Activated CD4-positive, alpha-beta T cell treated with anti-CD3 and anti-CD28 coated beads for 36 hours (primary cell): ENCODE measurements at regions of chr6 and their contacts with region 1.

Region 1: GRCh38 chr6:108492131-108492766 is 68.5 kb upstream of the FOXO3 start:
- DNase-seq: no peak
- ATAC-seq: peak; percentile 44
- H3K4me3 Mint-ChIP-seq: no peak overlapping the region
- H3K27ac Mint-ChIP-seq: no peak overlapping the region
- H3K4me1 Mint-ChIP-seq: no peaks in the 10 kb centered on the region
- H3K27me3 Mint-ChIP-seq: no peaks in the 10 kb centered on the region

Region 2: GRCh38 chr6:108250240-108250866 is 241.9 kb before region 1 on chr6:
- CTCF ChIA-PET with region 1: interaction called, 4 read pairs
- POLR2A ChIA-PET with region 1: no interaction called
- intact Hi-C with region 1: loop called in 1 of 2 experiments (anchors 5 kb)
- DNase-seq: no peak
- ATAC-seq: no peak
- H3K4me3 Mint-ChIP-seq: no peak overlapping the region
- H3K27ac Mint-ChIP-seq: no peak overlapping the region
- H3K4me1 Mint-ChIP-seq: peaks cover 48% of the 10 kb centered on the region
- H3K27me3 Mint-ChIP-seq: no peaks in the 10 kb centered on the region

Region 3: DNA sequence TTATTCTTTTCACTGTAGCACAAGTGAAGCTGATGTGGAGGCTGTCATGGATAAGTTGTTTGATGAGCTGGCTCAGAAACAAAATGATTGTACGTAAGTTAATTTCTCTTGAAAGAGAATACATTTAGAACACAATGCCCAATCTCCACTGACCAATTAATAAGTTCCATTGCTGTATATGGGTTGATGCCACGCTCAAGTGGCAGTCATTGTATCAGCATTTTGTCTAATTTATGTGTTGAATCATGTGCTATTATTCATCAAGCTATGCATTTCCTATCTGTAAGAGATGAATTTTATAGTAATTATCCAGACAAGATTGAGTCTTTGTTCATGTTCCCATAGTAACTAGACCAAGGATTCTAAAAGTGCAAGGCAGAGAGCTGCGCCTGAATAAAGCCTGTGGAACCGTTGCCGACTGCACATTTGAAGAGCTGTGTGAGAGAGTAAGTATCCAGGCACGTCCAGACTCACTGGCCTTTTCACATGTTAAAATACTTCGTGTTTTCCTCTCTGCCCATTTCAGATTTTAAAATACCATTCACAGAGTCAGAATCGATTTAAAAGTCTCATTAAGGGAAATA is 15.3 kb before region 1 on chr6:
- CTCF ChIA-PET with region 1: interaction called, 15 read pairs
- POLR2A ChIA-PET with region 1: no interaction called
- intact Hi-C with region 1: no loop called
- DNase-seq: no peak
- ATAC-seq: no peak
- H3K4me3 Mint-ChIP-seq: no peak overlapping the region
- H3K27ac Mint-ChIP-seq: no peak overlapping the region
- H3K4me1 Mint-ChIP-seq: peaks cover 4% of the 10 kb centered on the region
- H3K27me3 Mint-ChIP-seq: peaks cover 1% of the 10 kb centered on the region

Region 4: DNA sequence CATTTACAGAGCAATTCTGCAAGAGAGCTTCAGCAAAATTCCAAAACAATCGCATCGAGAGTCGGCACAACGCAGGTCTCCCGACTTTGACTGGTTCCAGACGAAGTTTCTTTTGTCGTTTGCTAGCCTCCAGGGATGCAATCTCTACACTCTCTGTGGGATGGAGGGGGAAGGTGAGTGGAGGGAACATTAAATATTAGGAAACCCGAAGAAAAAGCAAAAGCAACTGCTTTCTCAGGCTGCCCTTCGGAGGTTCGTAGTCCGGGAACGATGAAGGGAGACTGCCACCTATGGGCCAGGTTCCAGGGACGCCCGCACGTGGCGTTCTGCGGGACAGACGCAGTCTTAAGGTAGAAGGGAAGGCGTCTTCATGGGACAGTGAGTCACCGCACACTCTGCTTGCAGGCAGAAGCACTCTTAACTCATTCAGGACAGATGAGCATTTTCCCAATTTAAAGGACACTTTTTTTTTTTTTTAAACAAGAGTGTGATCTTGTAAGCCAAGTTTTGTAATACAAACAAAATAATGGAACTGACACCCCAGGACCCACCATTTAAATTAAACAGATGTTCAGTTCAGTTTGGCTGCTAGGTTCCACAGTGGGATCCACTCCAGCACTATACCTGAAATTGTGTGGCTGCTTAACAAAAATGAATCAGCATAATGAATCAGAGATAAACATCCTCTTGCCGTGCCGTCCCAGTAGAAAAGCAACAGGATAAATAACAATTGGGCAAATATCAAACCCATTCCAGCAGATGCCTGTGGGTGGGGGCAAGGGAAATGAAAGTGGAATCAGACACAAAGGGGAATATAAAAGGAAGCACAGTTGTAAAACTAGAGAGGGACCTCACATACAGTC is 290.2 kb after region 1 on chr6:
- CTCF ChIA-PET with region 1: no interaction called
- POLR2A ChIA-PET with region 1: no interaction called
- intact Hi-C with region 1: no loop called
- DNase-seq: peak; percentile 91
- ATAC-seq: peak; percentile 99
- H3K4me3 Mint-ChIP-seq: peak overlapping the region; percentile 71
- H3K27ac Mint-ChIP-seq: no peak overlapping the region
- H3K4me1 Mint-ChIP-seq: peaks cover 10% of the 10 kb centered on the region
- H3K27me3 Mint-ChIP-seq: peaks cover 3% of the 10 kb centered on the region